ENCODE measurements at regions of chr20 and their contacts with region 1.

Region 1: DNA sequence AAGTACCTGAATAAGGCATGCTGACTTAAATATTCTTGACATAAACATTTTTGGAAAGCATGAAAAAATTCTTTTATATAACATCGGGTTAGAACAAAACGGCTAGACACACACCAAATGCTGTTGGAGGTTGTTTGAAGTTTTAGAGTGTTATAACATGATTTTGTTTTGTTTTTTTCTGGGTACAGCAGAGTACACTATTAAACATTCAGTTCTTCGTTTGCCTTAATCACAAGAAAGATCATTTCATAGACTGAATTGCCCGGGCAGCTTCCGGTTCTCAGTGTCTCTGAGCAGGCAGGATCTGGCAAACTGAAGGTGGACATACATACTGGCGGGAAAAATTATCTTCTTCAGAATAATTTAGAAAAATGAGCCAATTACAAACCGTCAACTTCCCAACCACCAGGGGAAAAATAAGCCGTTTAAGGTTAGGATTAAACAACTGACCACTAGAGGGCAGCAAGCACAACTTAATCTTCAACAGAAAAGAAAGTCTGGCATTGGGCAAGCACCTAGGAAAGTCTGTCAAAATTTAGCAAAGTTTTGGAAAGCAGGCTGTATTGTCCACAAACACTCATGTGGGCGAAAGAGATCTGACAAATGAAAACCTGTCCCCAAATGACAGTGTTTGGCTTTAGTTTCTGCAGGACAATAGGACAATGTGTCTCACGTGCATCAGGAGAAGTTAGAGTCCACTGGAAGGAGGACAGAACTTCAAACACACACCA is 15.0 kb downstream of the ZNF217 start:
- DNase-seq: peak in 13 of 14 experiments; percentile 18 to 94 (median 44)
- ATAC-seq: peak; percentile 50
- H3K4me3 ChIP-seq: peak overlapping the region; percentile 57
- H3K4me3 Mint-ChIP-seq: peak overlapping the region; percentile 90
- H3K27ac ChIP-seq: peak overlapping the region; percentile 10 to 68
- H3K27ac Mint-ChIP-seq: peak overlapping the region; percentile 100
- H3K4me1 ChIP-seq: peaks cover 79% of the 10 kb centered on the region
- H3K4me1 Mint-ChIP-seq: peaks cover 96% of the 10 kb centered on the region
- H3K27me3 ChIP-seq: no peaks in the 10 kb centered on the region
- H3K27me3 Mint-ChIP-seq: no peaks in the 10 kb centered on the region
- CTCF ChIP-seq: peak; percentile 95

Region 2: GRCh38 chr20:53468587-53468986 is 110.1 kb before region 1 on chr20:
- CTCF ChIA-PET with region 1: no interaction called
- POLR2A ChIA-PET with region 1: no interaction called
- intact Hi-C with region 1: no loop called
- DNase-seq: peak in 2 of 14 experiments; percentile 8 to 14
- ATAC-seq: no peak
- H3K4me3 ChIP-seq: no peak overlapping the region
- H3K4me3 Mint-ChIP-seq: no peak overlapping the region
- H3K27ac ChIP-seq: no peak overlapping the region
- H3K27ac Mint-ChIP-seq: no peak overlapping the region
- H3K4me1 ChIP-seq: no peaks in the 10 kb centered on the region
- H3K4me1 Mint-ChIP-seq: no peaks in the 10 kb centered on the region
- H3K27me3 ChIP-seq: no peaks in the 10 kb centered on the region
- H3K27me3 Mint-ChIP-seq: peaks cover 4% of the 10 kb centered on the region
- CTCF ChIP-seq: no peak

Region 3: DNA sequence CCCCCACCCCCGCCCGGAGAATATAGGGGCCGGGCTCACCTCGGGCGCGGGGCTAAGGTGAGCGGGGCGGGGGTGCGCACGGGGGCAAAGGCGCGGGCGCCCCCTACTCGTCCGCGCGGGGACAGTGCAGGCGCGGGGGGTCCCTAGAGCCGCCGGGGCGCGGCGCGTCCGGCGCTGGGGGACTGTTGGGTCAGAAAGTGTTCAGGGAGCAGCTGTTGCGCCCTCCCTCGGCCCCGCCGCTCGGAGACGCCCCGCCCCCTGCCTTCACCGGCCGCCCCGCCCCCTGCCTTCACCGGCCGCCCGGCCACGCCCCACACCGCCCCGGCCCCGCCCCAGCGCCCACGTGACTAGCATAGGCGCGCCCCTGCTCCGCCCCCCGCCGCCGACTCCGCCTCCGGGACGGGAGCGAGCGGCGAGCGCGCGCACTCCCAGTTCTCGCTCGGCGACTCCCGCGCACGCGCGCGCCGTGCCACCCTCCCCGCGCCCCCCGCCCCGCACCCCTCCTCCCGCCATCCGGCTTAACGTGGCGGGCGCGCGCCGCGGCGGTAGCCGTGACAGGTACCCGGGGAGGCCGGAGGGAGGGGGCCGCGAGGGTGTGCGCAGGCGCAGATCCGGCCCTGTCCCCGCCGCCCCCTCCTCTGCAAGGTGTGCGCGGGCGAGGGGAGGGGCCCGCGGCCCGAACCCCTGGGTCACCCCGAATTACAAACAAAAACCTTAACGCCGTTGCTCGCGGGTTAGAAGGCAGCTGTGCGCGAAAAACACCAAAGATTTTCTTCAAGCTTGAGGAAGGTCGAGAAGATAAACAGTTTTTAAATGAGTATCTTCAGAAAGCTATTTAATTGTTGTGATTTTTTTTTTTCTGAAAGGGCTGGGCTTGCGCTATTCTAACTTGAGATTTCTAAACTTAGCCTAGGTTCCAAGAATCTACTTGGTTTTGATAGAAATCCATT is 15.7 kb after region 1 on chr20:
- CTCF ChIA-PET with region 1: interaction called, 4 read pairs
- POLR2A ChIA-PET with region 1: interaction called, 95 read pairs
- intact Hi-C with region 1: loop called (anchors 1 kb)
- DNase-seq: peak; percentile 95 to 100 (median 98)
- ATAC-seq: peak; percentile 63
- H3K4me3 ChIP-seq: peak overlapping the region; percentile 75
- H3K4me3 Mint-ChIP-seq: peak overlapping the region; percentile 93
- H3K27ac ChIP-seq: peak overlapping the region; percentile 63 to 74
- H3K27ac Mint-ChIP-seq: peak overlapping the region; percentile 100
- H3K4me1 ChIP-seq: peaks cover 24% of the 10 kb centered on the region
- H3K4me1 Mint-ChIP-seq: peaks cover 73% of the 10 kb centered on the region
- H3K27me3 ChIP-seq: no peaks in the 10 kb centered on the region
- H3K27me3 Mint-ChIP-seq: no peaks in the 10 kb centered on the region
- CTCF ChIP-seq: no peak

Region 4: DNA sequence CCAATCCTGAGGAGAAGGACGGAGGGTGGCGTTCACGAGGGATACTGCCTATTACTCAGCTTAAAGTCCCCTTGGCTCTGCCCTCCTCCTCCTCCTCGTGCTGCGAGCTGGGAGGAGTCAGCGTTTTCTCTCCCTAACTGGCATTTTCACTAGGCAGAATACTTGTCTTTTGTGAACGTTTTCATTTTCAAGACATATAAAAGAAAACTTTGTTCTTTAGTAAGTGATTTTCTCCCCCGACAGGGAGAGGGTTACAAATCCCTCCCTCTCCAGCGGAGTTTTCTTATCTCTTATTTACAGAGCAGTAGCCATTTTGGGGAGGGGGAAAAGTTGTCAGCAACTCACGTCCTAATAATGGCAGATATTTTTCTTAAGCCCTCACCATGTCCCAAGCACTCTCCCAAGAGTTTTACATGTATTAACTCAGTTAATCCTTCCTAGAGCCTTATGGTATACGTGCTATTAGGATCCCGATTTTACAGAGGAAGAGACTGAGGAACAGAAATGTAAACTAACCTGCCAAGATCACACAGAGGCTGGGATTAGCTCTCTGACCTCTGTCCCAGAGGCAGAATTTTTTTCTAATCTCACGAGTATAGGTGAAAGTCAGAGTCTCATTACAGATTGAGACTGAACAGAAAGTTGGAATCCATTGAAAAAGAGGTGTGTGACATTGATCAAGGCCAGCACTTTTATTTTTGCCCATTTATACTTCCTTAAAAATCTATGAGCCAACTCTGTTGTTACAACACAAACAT is 45.0 kb after region 1 on chr20:
- CTCF ChIA-PET with region 1: no interaction called
- POLR2A ChIA-PET with region 1: interaction called, 4 read pairs
- intact Hi-C with region 1: loop called (anchors 5 kb)
- DNase-seq: peak in 9 of 14 experiments; percentile 20 to 75 (median 41)
- ATAC-seq: peak; percentile 78
- H3K4me3 ChIP-seq: peak overlapping the region; percentile 57
- H3K4me3 Mint-ChIP-seq: peak overlapping the region; percentile 82
- H3K27ac ChIP-seq: peak overlapping the region; percentile 58 to 81
- H3K27ac Mint-ChIP-seq: peak overlapping the region; percentile 92
- H3K4me1 ChIP-seq: peaks cover 34% of the 10 kb centered on the region
- H3K4me1 Mint-ChIP-seq: peaks cover 37% of the 10 kb centered on the region
- H3K27me3 ChIP-seq: no peaks in the 10 kb centered on the region
- H3K27me3 Mint-ChIP-seq: no peaks in the 10 kb centered on the region
- CTCF ChIP-seq: no peak

Region 5: GRCh38 chr20:53699958-53700305 is 121.3 kb after region 1 on chr20:
- CTCF ChIA-PET with region 1: no interaction called
- POLR2A ChIA-PET with region 1: no interaction called
- intact Hi-C with region 1: loop called in 1 of 2 experiments (anchors 5 kb)
- DNase-seq: no peak
- ATAC-seq: no peak
- H3K4me3 ChIP-seq: no peak overlapping the region
- H3K4me3 Mint-ChIP-seq: no peak overlapping the region
- H3K27ac ChIP-seq: no peak overlapping the region
- H3K27ac Mint-ChIP-seq: no peak overlapping the region
- H3K4me1 ChIP-seq: peaks cover 16% of the 10 kb centered on the region
- H3K4me1 Mint-ChIP-seq: peaks cover 8% of the 10 kb centered on the region
- H3K27me3 ChIP-seq: no peaks in the 10 kb centered on the region
- H3K27me3 Mint-ChIP-seq: no peaks in the 10 kb centered on the region
- CTCF ChIP-seq: no peak

Region 6: GRCh38 chr20:53750827-53751619 is 172.4 kb after region 1 on chr20:
- CTCF ChIA-PET with region 1: no interaction called
- POLR2A ChIA-PET with region 1: interaction called, 3 read pairs
- intact Hi-C with region 1: loop called (anchors 5 kb)
- DNase-seq: peak in 8 of 14 experiments; percentile 2 to 75 (median 34)
- ATAC-seq: peak; percentile 57
- H3K4me3 ChIP-seq: no peak overlapping the region
- H3K4me3 Mint-ChIP-seq: peak overlapping the region; percentile 65
- H3K27ac ChIP-seq: peak overlapping the region; percentile 53 to 74
- H3K27ac Mint-ChIP-seq: peak overlapping the region; percentile 93
- H3K4me1 ChIP-seq: peaks cover 60% of the 10 kb centered on the region
- H3K4me1 Mint-ChIP-seq: peaks cover 76% of the 10 kb centered on the region
- H3K27me3 ChIP-seq: no peaks in the 10 kb centered on the region
- H3K27me3 Mint-ChIP-seq: no peaks in the 10 kb centered on the region
- CTCF ChIP-seq: no peak

Region 7: DNA sequence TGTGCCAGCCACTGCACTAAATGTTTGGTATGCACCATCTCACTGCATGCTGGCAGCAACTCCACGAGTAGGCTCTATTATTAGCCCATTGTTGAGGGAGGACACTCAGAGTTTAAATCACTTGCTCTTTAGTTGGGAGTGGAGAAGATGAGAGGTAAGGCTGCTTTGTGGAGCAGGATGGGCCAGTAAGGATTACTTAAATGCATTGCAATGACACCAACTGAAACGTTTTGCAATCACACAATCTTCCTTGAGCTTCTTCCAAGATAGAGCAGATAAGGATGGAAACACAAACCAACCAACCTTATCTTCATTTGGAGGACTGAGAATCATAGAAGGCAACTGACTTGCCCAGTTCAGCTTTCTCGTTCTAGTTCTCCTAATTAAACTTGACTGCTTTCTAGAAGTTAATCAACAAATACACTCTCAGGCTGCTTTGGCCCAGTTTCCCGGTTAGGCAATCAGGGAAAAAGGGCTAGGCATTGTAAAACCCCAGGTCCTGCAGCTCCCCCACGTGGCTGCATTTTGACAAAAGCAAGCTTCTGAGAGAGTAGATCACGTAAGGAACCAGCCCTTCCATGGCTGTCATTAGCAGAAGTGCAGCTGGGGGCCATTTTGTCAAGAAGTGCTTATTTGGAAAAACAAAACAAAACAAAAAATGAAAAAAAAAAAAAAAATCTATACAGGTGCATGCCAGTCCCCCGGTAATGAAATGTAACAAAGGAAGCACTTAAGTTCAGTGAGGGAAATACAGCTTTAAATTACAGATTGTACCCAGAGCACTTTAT is 361.1 kb after region 1 on chr20:
- CTCF ChIA-PET with region 1: interaction called, 3 read pairs
- POLR2A ChIA-PET with region 1: interaction called, 9 read pairs
- intact Hi-C with region 1: loop called (anchors 2 kb)
- DNase-seq: peak; percentile 35 to 85 (median 56)
- ATAC-seq: peak; percentile 75
- H3K4me3 ChIP-seq: no peak overlapping the region
- H3K4me3 Mint-ChIP-seq: no peak overlapping the region
- H3K27ac ChIP-seq: no peak overlapping the region
- H3K27ac Mint-ChIP-seq: no peak overlapping the region
- H3K4me1 ChIP-seq: peaks cover 17% of the 10 kb centered on the region
- H3K4me1 Mint-ChIP-seq: peaks cover 47% of the 10 kb centered on the region
- H3K27me3 ChIP-seq: no peaks in the 10 kb centered on the region
- H3K27me3 Mint-ChIP-seq: no peaks in the 10 kb centered on the region
- CTCF ChIP-seq: peak; percentile 76

Region 8: DNA sequence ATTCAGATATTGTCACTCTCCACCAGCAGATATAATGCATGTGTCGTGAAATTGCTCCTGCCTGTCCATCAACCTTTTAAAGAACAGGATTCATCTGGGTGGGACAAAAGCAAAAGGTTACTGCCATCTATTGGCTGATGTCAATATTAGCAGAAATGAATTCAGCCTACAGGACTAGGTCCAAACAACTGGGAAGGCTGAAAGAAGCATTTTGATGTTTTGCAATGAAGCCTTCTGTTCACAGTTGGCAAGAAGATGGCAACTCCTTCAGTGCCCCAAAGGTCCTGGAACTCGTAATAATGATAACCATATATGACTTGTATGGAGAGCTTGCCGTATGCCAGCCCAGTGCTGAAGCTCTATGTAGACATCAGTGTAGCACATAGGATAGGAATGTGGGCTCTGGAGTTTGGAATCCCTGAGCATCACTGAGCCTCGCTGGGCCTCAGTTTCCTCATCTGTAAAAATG is 484.2 kb after region 1 on chr20:
- CTCF ChIA-PET with region 1: no interaction called
- POLR2A ChIA-PET with region 1: no interaction called
- intact Hi-C with region 1: loop called (anchors 5 to 10 kb)
- DNase-seq: peak in 3 of 14 experiments; percentile 40 to 52 (median 48)
- ATAC-seq: no peak
- H3K4me3 ChIP-seq: no peak overlapping the region
- H3K4me3 Mint-ChIP-seq: no peak overlapping the region
- H3K27ac ChIP-seq: no peak overlapping the region
- H3K27ac Mint-ChIP-seq: no peak overlapping the region
- H3K4me1 ChIP-seq: peaks cover 8% of the 10 kb centered on the region
- H3K4me1 Mint-ChIP-seq: peaks cover 5% of the 10 kb centered on the region
- H3K27me3 ChIP-seq: no peaks in the 10 kb centered on the region
- H3K27me3 Mint-ChIP-seq: no peaks in the 10 kb centered on the region
- CTCF ChIP-seq: peak; percentile 73

Region 9: DNA sequence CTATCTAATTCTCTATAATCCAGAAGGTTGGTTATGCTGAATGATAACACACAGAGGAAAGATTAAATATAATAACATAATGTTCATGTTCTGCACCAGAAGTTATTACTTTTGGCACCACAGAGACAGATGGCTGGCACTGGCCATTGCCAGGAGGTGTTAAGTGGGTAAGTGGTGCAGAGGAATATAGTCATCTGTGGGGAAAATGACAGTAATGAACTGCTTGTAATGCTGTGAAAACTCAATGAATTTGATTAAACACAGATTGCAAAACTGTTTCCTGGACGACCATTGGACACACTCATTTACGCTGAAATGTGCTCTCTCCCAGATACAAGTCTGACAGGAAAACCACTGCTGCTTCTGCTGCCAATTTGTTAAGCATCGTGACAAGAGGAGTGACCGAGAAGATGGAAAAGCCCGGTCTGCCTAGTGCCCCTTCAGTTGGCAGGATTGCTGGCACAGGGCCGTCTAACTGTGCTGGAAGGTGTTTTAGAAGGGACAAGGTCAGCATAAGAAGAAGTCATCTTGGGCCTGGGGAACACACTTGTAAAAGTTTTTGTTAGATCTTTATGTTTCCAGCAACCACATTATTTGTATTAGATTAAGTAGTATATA is 1859.2 kb after region 1 on chr20:
- CTCF ChIA-PET with region 1: no interaction called
- POLR2A ChIA-PET with region 1: no interaction called
- intact Hi-C with region 1: no loop called
- DNase-seq: no peak
- ATAC-seq: no peak
- H3K4me3 ChIP-seq: no peak overlapping the region
- H3K4me3 Mint-ChIP-seq: no peak overlapping the region
- H3K27ac ChIP-seq: no peak overlapping the region
- H3K27ac Mint-ChIP-seq: no peak overlapping the region
- H3K4me1 ChIP-seq: no peaks in the 10 kb centered on the region
- H3K4me1 Mint-ChIP-seq: no peaks in the 10 kb centered on the region
- H3K27me3 ChIP-seq: no peaks in the 10 kb centered on the region
- H3K27me3 Mint-ChIP-seq: no peaks in the 10 kb centered on the region
- CTCF ChIP-seq: no peak